Gastrocnemius medialis (tissue), 4 donors: ENCODE measurements at regions of chr12 and their contacts with region 1.

Region 1: DNA sequence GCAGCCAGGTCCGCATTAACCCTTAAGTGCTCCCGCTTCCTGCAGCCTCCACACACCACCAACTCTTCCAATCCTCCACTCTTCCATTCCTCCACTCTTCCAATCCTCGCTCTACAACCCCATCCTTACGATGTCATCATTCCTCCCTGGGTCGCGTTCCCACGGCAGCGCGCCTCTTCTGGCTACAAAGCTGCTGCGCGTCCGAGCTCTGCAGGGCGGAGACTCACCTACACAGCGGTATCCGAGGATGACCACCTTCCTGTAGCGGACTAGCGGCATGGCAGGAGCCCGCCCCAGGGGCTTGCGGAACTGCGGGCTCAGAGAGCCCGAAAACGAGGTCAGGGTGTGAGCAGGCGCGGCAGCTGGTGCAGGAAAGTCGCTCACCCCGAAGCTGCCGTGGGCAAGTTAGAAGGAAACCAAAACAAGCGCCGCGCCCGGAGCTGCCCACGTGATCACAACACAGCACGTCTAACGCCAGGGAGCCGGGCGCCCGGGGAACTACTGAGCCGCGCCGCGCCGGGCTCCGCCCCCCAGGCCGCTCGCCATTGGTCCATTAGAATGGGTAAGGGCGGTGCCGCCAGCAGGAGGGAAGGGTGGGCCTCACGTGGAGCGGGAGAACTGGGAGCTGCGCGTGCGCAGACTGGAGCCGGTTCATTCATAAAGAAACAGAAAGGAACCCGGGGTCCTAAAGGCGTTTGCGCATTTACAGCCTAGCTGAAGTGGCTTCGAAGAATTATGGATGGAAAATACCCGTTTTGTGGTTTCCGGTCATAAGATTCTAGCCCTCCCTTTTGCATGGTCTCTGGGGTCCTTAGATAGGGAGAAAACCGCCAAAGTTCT is at the start of gene RHEBL1:
- DNase-seq: peak; percentile 97 to 98
- ATAC-seq: peak; percentile 98 to 99
- H3K4me3 ChIP-seq: peak within 1 kb of the TSS; percentile 77 to 94 (median 86)
- H3K27ac ChIP-seq: peak within 1 kb of the TSS; percentile 80 to 84 (median 82)
- H3K4me1 ChIP-seq: peaks cover 9 to 11% of the 10 kb centered on the region in 2 donors
- H3K27me3 ChIP-seq: no peaks in the 10 kb centered on the region
- CTCF ChIP-seq: peak in 1 of 5 experiments; percentile 9
- POLR2A ChIP-seq: peak; percentile 17 to 26
- total RNA-seq, gene RHEBL1: 0.46 to 0.71 TPM in 2 of 4 donors, not detected in the others

Region 2: GRCh38 chr12:47657565-47657964 is 1412.2 kb before region 1 on chr12:
- in situ Hi-C with region 1: no loop called
- intact Hi-C with region 1: no loop called
- DNase-seq: no peak
- ATAC-seq: no peak
- H3K4me3 ChIP-seq: no peak overlapping the region
- H3K27ac ChIP-seq: no peak overlapping the region
- H3K4me1 ChIP-seq: no peaks in the 10 kb centered on the region
- H3K27me3 ChIP-seq: no peaks in the 10 kb centered on the region
- CTCF ChIP-seq: no peak
- POLR2A ChIP-seq: no peak

Region 3: DNA sequence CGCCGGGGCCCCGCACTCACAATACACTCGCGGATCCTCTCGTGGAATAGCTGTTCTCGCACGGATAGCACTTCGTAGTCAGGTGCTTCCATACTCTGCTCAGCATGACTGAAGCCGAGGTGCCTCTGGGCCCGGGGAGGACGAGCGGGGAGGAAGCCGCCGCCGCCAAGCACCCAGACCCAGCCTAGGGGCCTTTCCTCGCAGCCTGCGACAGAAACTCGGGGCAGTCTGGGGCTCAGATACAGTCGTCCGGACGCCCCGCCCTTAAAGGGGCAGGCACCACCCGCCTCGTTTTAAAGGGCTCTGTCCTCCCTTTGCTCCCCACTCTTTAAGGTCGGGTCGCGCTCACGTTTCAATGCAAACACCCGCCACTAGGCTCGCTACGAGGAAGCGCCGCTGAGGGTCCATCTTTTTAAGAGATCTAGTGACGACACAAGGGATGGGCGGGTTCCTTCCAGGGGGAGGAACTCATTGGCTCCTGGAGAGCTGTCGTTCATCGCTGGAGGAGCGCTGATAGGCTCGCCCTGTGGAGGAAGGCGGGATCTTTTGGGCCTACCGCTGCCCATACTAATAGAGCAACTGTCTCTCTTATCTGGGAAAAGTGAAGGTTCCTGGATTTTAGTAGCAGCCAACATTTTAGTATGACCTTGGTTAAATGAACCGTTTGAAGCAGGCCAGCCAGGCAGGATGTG is 40.9 kb after region 1 on chr12 and contains the start of gene LMBR1L:
- in situ Hi-C with region 1: loop called in 2 of 4 experiments (anchors 10 kb)
- intact Hi-C with region 1: loop called (anchors 2 kb)
- DNase-seq: peak; percentile 97 to 98
- ATAC-seq: peak; percentile 97 to 98
- H3K4me3 ChIP-seq: peak within 1 kb of the TSS; percentile 81 to 99 (median 99)
- H3K27ac ChIP-seq: peak within 1 kb of the TSS; percentile 92 to 100 (median 100)
- H3K4me1 ChIP-seq: peaks cover 43 to 48% of the 10 kb centered on the region in 2 donors
- H3K27me3 ChIP-seq: no peaks in the 10 kb centered on the region
- CTCF ChIP-seq: peak; percentile 50 to 67 (median 56)
- POLR2A ChIP-seq: peak; percentile 80 to 97
- total RNA-seq, gene LMBR1L: 11.1 to 27.2 (median 15.9) TPM

Region 4: GRCh38 chr12:49121047-49121696 is 51.4 kb after region 1 on chr12:
- in situ Hi-C with region 1: loop called in 3 of 4 experiments (anchors 10 kb)
- intact Hi-C with region 1: no loop called
- DNase-seq: peak; percentile 31 to 45
- ATAC-seq: peak; percentile 88 to 94
- H3K4me3 ChIP-seq: no peak overlapping the region
- H3K27ac ChIP-seq: no peak overlapping the region
- H3K4me1 ChIP-seq: no peaks in the 10 kb centered on the region
- H3K27me3 ChIP-seq: no peaks in the 10 kb centered on the region
- CTCF ChIP-seq: peak; percentile 44 to 67 (median 62)
- POLR2A ChIP-seq: no peak

Region 5: DNA sequence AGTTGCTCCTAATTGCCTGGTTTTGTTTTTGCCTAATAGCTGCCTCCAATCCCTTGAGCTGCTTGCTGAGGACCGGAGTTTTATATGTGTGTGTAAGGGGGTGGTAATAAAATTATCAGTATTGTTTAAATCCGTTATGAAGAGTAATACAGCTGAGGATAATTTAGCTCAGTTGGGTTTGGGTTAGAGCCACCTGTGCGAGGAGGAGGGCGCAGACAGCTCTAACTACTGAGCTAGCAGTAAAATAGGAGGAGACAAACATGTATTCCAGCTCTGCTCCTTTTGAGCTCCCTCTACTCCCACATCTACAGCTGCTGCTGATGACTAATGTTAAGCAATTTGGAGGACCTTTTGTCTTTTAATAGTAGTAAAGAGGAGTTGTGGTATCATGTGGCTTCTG is 359.1 kb after region 1 on chr12:
- in situ Hi-C with region 1: no loop called
- intact Hi-C with region 1: no loop called
- DNase-seq: no peak
- ATAC-seq: peak; percentile 56 to 69
- H3K4me3 ChIP-seq: no peak overlapping the region
- H3K27ac ChIP-seq: peak overlapping the region in 1 of 4 donors; percentile 6
- H3K4me1 ChIP-seq: peaks cover 0 to 8% of the 10 kb centered on the region in 2 donors
- H3K27me3 ChIP-seq: no peaks in the 10 kb centered on the region
- CTCF ChIP-seq: no peak
- POLR2A ChIP-seq: no peak